A549 (cell line): ENCODE measurements at regions of chr17 and their contacts with region 1.

Region 1: GRCh38 chr17:72120642-72121163 is at the start of gene SOX9:
- DNase-seq: peak; percentile 96 to 100
- ATAC-seq: peak; percentile 88 to 96
- H3K4me3 ChIP-seq: peak within 1 kb of the TSS; percentile 82
- H3K27ac ChIP-seq: peak within 1 kb of the TSS; percentile 81 to 90
- H3K4me1 ChIP-seq: peaks cover 42% of the 10 kb centered on the region
- CTCF ChIP-seq: no peak
- EP300 ChIP-seq: no peak
- POLR2A ChIP-seq: peak; percentile 94
- RAD21 ChIP-seq: peak in 1 of 2 experiments; percentile 16; a peak in 2 of 5 replicates
- polyA plus RNA-seq, gene SOX9: 6.7 and 8.0 TPM in 2 replicates

Region 2: GRCh38 chr17:71441098-71441497 is 679.6 kb before region 1 on chr17:
- CTCF ChIA-PET with region 1: no interaction called
- POLR2A ChIA-PET with region 1: interaction called, 11 read pairs
- DNase-seq: peak; percentile 45 to 90
- ATAC-seq: peak; percentile 94 to 96
- H3K4me3 ChIP-seq: peak overlapping the region; percentile 15; the same call in 1 of the 3 replicates
- H3K27ac ChIP-seq: peak overlapping the region; percentile 58 to 80
- H3K4me1 ChIP-seq: peaks cover 37% of the 10 kb centered on the region
- CTCF ChIP-seq: no peak
- EP300 ChIP-seq: no peak
- POLR2A ChIP-seq: no peak
- RAD21 ChIP-seq: 0 out of 5 replicates have a peak, but pooled peaks of 1 of the 2 experiments have one; percentile 16

Region 3: DNA sequence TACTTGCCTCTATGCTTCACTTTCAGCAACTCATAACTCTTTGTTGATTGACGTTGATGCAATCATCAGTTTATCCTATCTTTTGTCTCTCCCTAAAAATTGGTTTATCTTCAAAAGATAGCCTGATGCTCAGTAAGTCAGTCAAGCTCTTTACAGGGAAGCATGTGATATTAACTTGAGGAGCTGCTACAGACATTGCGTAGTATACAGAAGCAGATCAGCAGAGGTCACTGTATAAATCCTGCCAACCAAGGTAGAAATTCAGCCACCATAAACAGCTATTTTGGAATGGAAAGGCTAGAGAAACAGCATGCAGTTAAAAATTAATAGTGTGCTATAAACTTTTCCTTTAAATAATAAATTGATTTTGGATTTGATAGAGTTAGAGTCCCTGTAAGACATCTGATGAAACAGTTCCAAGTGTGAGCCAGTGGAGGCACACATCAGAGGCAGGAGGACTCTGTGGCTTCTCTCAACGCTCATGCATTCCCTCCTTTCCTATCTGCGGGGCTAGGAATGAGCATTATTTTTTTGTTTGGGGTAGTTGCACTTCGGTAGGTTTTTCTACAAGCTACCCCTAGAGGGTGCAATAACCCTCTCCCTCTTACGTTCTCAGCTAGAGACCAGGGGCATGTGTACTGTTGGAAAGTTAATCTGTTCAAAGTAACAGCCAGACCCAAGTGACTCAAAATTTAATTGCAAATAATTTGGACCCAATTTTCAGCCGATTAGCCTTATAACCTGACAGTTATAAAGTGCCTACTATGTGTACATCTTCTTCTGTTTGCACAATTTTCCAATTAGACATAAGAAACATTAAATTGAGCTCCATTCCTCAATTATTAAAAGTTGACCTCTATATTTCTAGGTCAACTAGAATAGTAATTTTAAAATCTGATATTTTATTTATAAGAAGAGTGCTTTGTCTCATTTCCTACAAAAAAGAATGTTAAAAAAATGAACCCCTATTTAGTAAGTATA is 647.6 kb before region 1 on chr17:
- CTCF ChIA-PET with region 1: interaction called, 36 read pairs
- POLR2A ChIA-PET with region 1: interaction called, 4 read pairs
- DNase-seq: peak; percentile 55 to 68
- ATAC-seq: peak; percentile 93 to 94
- H3K4me3 ChIP-seq: no peak overlapping the region
- H3K27ac ChIP-seq: 0 out of 6 replicates have a peak overlapping the region, but pooled peaks of 1 of the 2 experiments have one; percentile 10
- H3K4me1 ChIP-seq: peaks cover 3% of the 10 kb centered on the region; the same call in 1 of the 3 replicates
- CTCF ChIP-seq: peak; percentile 87
- EP300 ChIP-seq: no peak
- POLR2A ChIP-seq: no peak
- RAD21 ChIP-seq: peak; percentile 76 to 84

Region 4: GRCh38 chr17:72110231-72110944 is 10.3 kb before region 1 on chr17:
- CTCF ChIA-PET with region 1: interaction called, 18 read pairs
- POLR2A ChIA-PET with region 1: no interaction called
- DNase-seq: no peak
- ATAC-seq: peak; percentile 21 to 50; a peak in 3 of 6 replicates
- H3K4me3 ChIP-seq: no peak overlapping the region
- H3K27ac ChIP-seq: peak overlapping the region in 1 of 2 experiments; percentile 53; a peak in 2 of 6 replicates
- H3K4me1 ChIP-seq: peaks cover 11% of the 10 kb centered on the region
- CTCF ChIP-seq: no peak
- EP300 ChIP-seq: no peak
- POLR2A ChIP-seq: no peak
- RAD21 ChIP-seq: no peak

Region 5: DNA sequence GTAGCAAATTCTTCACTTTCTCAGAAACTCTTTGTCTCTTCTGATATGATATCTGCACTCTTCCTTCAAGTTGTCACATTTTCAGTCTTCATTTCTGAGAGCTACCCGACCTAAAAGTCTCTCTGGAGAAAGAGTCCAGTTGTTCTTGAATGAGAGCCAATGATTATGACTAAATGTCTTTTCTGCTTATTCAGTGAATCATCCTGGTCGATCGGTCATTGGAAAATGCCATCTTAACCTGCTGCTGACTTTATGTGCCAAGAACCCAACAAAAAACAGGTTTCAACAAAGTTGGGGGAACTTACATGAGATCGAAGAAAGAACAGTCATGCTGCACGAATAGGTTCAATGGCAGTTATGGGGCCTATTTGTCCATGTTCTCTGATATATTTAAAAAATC is 16.0 kb after region 1 on chr17:
- CTCF ChIA-PET with region 1: interaction called, 14 read pairs
- POLR2A ChIA-PET with region 1: interaction called, 6 read pairs
- DNase-seq: peak; percentile 44 to 62
- ATAC-seq: peak in 1 of 2 experiments; percentile 69; a peak in 3 of 6 replicates
- H3K4me3 ChIP-seq: no peak overlapping the region
- H3K27ac ChIP-seq: peak overlapping the region; percentile 58 to 72
- H3K4me1 ChIP-seq: peaks cover 53% of the 10 kb centered on the region
- CTCF ChIP-seq: no peak
- EP300 ChIP-seq: no peak
- POLR2A ChIP-seq: no peak
- RAD21 ChIP-seq: peak in 1 of 2 experiments; percentile 26; a peak in 2 of 5 replicates

Region 6: DNA sequence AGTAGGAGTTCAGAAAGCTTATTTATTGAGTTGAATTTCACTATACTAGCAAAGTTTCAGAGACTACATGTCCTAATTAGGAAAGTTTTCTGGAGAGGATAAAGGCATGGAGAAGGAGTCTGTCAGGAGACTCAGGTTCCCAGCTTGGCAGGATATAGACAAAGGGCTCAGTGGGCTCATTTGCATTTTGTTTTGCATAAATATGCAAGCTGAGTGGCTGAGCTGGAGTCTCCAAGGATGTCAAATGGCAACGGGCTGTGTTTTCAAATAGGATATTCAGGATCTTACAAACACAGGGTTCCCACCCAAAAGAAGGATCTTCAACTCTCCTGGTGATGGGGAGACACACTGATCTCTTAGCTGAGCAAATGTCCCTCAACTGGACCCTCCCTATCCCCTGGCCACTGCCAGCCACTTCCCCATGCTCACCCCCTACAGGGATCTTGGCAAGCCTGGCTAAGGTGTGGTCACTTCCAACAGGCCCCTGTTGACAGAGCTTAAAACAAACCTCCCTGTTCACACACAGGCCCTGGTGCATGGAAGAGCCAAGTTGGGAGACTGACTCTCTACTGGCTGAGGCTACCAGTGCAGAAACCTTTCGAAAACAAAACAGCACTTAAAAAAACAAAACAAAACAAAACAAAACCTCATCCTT is 61.7 kb after region 1 on chr17:
- CTCF ChIA-PET with region 1: no interaction called
- POLR2A ChIA-PET with region 1: no interaction called
- DNase-seq: peak; percentile 30 to 76
- ATAC-seq: peak; percentile 32 to 75; a peak in 5 of 6 replicates
- H3K4me3 ChIP-seq: peak overlapping the region; percentile 1; the same call in 1 of the 3 replicates
- H3K27ac ChIP-seq: peak overlapping the region; percentile 63 to 81
- H3K4me1 ChIP-seq: peaks cover 36% of the 10 kb centered on the region
- CTCF ChIP-seq: no peak
- EP300 ChIP-seq: no peak
- POLR2A ChIP-seq: no peak
- RAD21 ChIP-seq: 0 out of 5 replicates have a peak, but pooled peaks of 1 of the 2 experiments have one; percentile 1

Region 7: DNA sequence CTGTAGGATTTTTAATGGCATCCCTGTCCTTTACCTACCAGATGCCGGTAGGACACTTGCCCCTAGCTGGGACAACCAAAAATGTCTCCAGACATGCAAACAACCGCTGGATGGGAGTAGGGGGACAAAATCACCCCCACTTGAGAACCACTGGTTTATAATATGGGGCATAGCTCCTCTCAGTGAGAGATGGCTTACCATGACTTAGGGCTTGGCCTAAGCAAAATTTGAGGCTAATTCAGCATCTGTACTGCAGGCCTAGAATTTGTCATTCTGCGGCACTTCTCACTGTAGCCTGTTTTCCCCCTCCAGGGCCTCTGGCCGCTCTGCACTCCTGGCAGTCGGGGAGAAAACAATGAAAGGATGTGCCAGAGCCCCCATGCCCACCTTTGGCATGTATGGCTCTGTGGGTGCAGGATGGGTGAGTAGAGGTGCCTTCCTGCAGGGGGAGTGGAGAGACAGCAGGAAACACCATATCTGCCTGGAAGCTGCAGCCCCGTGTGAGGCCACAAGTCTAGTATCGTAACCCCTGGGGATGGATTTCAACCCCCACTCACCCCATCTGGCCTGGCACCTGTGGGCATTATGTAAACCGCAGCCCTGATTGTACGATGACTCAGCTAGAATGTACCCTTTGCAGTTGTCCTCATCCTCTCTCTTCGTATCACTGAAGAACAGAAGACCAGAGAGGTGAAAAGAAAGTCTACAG is 268.2 kb after region 1 on chr17:
- CTCF ChIA-PET with region 1: interaction called, 10 read pairs
- POLR2A ChIA-PET with region 1: interaction called, 8 read pairs
- DNase-seq: peak; percentile 87 to 90
- ATAC-seq: peak; percentile 65 to 76
- H3K4me3 ChIP-seq: no peak overlapping the region
- H3K27ac ChIP-seq: peak overlapping the region; percentile 76 to 85
- H3K4me1 ChIP-seq: peaks cover 87% of the 10 kb centered on the region
- CTCF ChIP-seq: peak; percentile 55
- EP300 ChIP-seq: peak; percentile 60 to 75; a peak in 3 of 5 replicates
- POLR2A ChIP-seq: no peak
- RAD21 ChIP-seq: peak; percentile 77 to 87

Region 8: GRCh38 chr17:72539981-72540897 is 419.5 kb after region 1 on chr17:
- CTCF ChIA-PET with region 1: interaction called, 47 read pairs
- POLR2A ChIA-PET with region 1: interaction called, 10 read pairs
- DNase-seq: peak; percentile 79 to 86
- ATAC-seq: peak; percentile 90 to 94
- H3K4me3 ChIP-seq: peak overlapping the region; percentile 22
- H3K27ac ChIP-seq: peak overlapping the region; percentile 82 to 87
- H3K4me1 ChIP-seq: peaks cover 25% of the 10 kb centered on the region
- CTCF ChIP-seq: peak; percentile 99
- EP300 ChIP-seq: no peak
- POLR2A ChIP-seq: no peak
- RAD21 ChIP-seq: peak; percentile 92 to 100